OCI-LY7 (cell line): ENCODE measurements at regions of chr5 and their contacts with region 1.

Region 1: GRCh38 chr5:98846518-98846917 is 73.1 kb downstream of the RGMB start:
- DNase-seq: no peak
- H3K4me3 ChIP-seq: no peak overlapping the region
- H3K27ac ChIP-seq: no peak overlapping the region
- H3K4me1 ChIP-seq: no peaks in the 10 kb centered on the region
- CTCF ChIP-seq: no peak

Region 2: DNA sequence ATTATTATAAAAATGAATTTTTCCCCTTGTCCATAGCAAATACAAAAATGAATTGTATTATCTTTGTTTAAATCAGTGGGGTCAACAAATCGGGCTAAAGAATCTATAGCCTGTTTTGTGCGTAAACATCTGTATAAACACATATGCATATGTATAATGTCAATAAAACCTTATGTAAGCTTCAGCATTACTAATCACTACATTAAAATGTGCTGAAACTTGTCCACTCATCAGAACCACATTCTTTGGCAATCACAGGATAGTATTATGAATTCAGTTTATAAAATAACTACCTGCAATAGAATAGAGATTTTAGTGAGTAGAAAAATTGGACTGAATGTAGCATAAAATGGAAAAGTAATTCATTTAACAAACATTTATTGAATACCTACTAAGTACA is 42.5 kb before region 1 on chr5:
- CTCF ChIA-PET with region 1: no interaction called
- POLR2A ChIA-PET with region 1: no interaction called
- intact Hi-C with region 1: no loop called
- DNase-seq: no peak
- H3K4me3 ChIP-seq: no peak overlapping the region
- H3K27ac ChIP-seq: no peak overlapping the region
- H3K4me1 ChIP-seq: no peaks in the 10 kb centered on the region
- CTCF ChIP-seq: no peak

Region 3: DNA sequence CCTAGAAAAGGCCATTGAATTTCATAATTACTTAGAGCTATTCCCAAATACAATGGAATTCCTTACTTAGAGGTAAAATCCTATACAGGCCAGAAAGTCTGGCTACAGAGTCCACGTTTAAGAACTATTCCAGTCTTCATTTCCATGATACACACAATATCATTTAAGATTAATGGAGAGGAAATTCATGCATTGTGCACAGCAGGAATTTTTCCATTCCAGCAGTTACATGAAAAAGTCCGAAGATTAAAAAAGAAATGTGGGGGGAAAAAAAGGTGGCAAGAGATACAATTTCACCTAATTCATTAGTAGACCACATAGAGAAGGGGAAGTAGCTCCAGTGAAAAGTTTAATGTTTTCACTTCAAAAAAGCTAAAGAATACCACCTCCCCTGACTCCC is 19.2 kb after region 1 on chr5:
- CTCF ChIA-PET with region 1: no interaction called
- POLR2A ChIA-PET with region 1: interaction called, 14 read pairs
- intact Hi-C with region 1: no loop called
- DNase-seq: no peak
- H3K4me3 ChIP-seq: no peak overlapping the region
- H3K27ac ChIP-seq: no peak overlapping the region
- H3K4me1 ChIP-seq: no peaks in the 10 kb centered on the region
- CTCF ChIP-seq: no peak